T-cell (primary cell): ENCODE measurements at regions of chr1 and their contacts with region 1.

Region 1: DNA sequence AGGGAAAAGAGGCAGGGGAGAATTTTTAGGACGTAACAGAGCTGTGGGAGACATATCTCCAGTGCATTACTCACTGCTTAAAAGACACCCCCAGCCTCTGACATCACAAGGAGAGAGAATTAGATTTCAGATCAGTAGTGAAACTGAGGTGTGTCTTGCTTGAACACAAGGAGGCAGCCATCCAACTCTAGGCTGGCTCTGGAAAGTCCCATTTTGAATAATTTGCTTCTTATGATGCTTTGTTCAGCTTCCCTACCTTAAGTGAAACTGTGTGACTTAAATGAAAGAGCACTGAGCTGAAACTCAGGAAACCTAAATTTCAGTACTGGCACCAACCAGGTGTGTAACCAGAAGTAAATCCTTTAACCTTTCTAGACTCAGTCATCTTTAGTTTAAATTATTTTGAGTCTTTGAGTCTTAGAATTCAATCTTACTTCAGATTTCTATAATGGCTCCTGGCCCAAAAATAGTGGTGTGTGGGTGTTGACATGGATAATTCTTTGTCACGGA is 251.6 kb upstream of the SGIP1 start:
- DNase-seq: peak in 34 of 35 experiments; percentile 25 to 87 (median 58)
- ATAC-seq: peak; percentile 77 to 96 (median 84)
- H3K4me3 ChIP-seq: no peak overlapping the region
- H3K4me3 Mint-ChIP-seq: peak overlapping the region in 1 of 3 donors; percentile 23
- H3K27ac ChIP-seq: peak overlapping the region; percentile 61
- H3K27ac Mint-ChIP-seq: peak overlapping the region; percentile 84 to 87
- H3K4me1 ChIP-seq: peaks cover 27 to 52% of the 10 kb centered on the region in 2 experiments
- H3K4me1 Mint-ChIP-seq: peaks cover 87 to 94% (median 88%) of the 10 kb centered on the region in 3 donors
- H3K27me3 ChIP-seq: no peaks in the 10 kb centered on the region
- H3K27me3 Mint-ChIP-seq: no peaks in the 10 kb centered on the region

Region 2: GRCh38 chr1:66300972-66301451 is 18.6 kb after region 1 on chr1:
- CTCF ChIA-PET with region 1: interaction called, 6 to 15 read pairs
- POLR2A ChIA-PET with region 1: interaction called, 3 to 4 read pairs
- DNase-seq: peak in 19 of 35 experiments; percentile 3 to 70 (median 17)
- ATAC-seq: peak; percentile 82 to 88 (median 86)
- H3K4me3 ChIP-seq: peak overlapping the region; percentile 18 to 27
- H3K4me3 Mint-ChIP-seq: peak overlapping the region; percentile 72 to 77 (median 73)
- H3K27ac ChIP-seq: peak overlapping the region; percentile 77
- H3K27ac Mint-ChIP-seq: peak overlapping the region; percentile 91 to 97
- H3K4me1 ChIP-seq: peaks cover 12 to 24% of the 10 kb centered on the region in 2 experiments
- H3K4me1 Mint-ChIP-seq: peaks cover 34 to 45% (median 38%) of the 10 kb centered on the region in 3 donors
- H3K27me3 ChIP-seq: no peaks in the 10 kb centered on the region
- H3K27me3 Mint-ChIP-seq: no peaks in the 10 kb centered on the region

Region 3: GRCh38 chr1:66342707-66343106 is 60.3 kb after region 1 on chr1:
- CTCF ChIA-PET with region 1: interaction called, 3 read pairs
- POLR2A ChIA-PET with region 1: interaction called in 1 of 2 experiments, 12 read pairs
- DNase-seq: no peak
- ATAC-seq: peak in 1 of 4 experiments; percentile 33
- H3K4me3 ChIP-seq: no peak overlapping the region
- H3K4me3 Mint-ChIP-seq: peak overlapping the region; percentile 29 to 65 (median 48)
- H3K27ac ChIP-seq: no peak overlapping the region
- H3K27ac Mint-ChIP-seq: peak overlapping the region; percentile 85 to 89
- H3K4me1 ChIP-seq: peaks cover 31 to 66% of the 10 kb centered on the region in 2 experiments
- H3K4me1 Mint-ChIP-seq: peaks cover 80 to 89% (median 83%) of the 10 kb centered on the region in 3 donors
- H3K27me3 ChIP-seq: no peaks in the 10 kb centered on the region
- H3K27me3 Mint-ChIP-seq: no peaks in the 10 kb centered on the region